ENCODE measurements at regions of chr4 and their contacts with region 1.

Region 1: DNA sequence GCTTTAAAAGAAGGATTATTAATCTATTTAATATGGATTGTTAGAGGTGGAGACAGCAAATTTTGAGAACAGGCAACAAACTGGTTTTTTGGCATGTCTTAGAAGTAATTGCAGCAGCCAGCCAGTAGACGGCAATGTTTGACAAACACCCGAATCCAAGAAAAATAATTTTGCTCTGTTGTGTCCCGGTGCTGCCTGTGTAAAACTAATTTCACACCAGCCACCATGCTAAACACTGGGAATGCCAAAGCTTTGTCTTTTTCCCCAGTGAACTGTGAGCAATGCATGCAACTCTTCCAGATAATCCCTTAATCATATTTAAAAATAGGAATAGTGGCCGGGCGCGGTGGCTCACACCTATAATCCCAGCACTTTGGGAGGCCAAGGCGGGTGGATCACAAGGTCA is 25.9 kb downstream of the SMIM31 start:
- DNase-seq: peak; percentile 13
- ATAC-seq: peak; percentile 57
- H3K4me3 ChIP-seq: no peak overlapping the region
- H3K27ac ChIP-seq: no peak overlapping the region
- H3K4me1 ChIP-seq: no peaks in the 10 kb centered on the region
- H3K27me3 ChIP-seq: no peaks in the 10 kb centered on the region
- CTCF ChIP-seq: peak; percentile 72
- EP300 ChIP-seq: no peak
- POLR2A ChIP-seq: no peak
- RAD21 ChIP-seq: peak; percentile 37; the same call in 1 of the 2 replicates

Region 2: GRCh38 chr4:164734484-164734883 is 45.3 kb before region 1 on chr4:
- CTCF ChIA-PET with region 1: no interaction called
- POLR2A ChIA-PET with region 1: no interaction called
- in situ Hi-C with region 1: no loop called
- intact Hi-C with region 1: no loop called
- DNase-seq: no peak
- ATAC-seq: no peak
- H3K4me3 ChIP-seq: no peak overlapping the region
- H3K27ac ChIP-seq: no peak overlapping the region
- H3K4me1 ChIP-seq: no peaks in the 10 kb centered on the region
- H3K27me3 ChIP-seq: no peaks in the 10 kb centered on the region
- CTCF ChIP-seq: no peak
- EP300 ChIP-seq: no peak
- POLR2A ChIP-seq: no peak
- RAD21 ChIP-seq: no peak

Region 3: DNA sequence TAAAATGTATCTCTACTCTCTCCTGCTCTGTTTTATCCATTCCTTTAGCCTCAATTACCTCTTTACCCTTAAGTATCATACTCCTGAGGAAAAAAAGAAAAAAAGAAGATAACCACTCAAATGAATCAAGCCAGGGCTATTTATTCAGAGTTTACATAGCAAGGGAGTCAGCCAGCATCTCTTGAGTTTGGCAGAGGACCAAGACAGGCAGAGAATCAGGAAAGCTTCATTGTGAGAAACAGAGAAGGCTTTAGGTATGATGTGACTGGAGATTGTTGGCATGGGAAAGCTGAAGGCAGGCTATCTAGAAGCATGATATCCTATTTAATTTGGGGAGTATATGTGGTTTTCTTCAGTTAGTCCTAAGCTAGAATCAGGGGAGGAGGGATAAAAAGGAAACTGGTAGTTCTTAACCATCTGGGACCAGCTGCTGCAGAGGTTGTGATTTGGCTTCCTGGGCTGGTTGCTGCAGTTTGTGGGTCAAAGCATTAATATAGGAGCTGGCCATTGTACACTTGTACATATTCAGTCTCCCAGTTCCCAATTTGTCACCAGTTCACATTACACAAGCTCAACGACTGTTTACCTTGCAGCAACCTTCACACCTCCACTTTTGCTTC is 108.4 kb after region 1 on chr4:
- CTCF ChIA-PET with region 1: no interaction called
- POLR2A ChIA-PET with region 1: no interaction called
- in situ Hi-C with region 1: no loop called
- intact Hi-C with region 1: loop called (anchors 1 kb)
- DNase-seq: no peak
- ATAC-seq: no peak
- H3K4me3 ChIP-seq: no peak overlapping the region
- H3K27ac ChIP-seq: no peak overlapping the region
- H3K4me1 ChIP-seq: no peaks in the 10 kb centered on the region
- H3K27me3 ChIP-seq: no peaks in the 10 kb centered on the region
- CTCF ChIP-seq: no peak
- EP300 ChIP-seq: no peak
- POLR2A ChIP-seq: no peak
- RAD21 ChIP-seq: no peak

Region 4: GRCh38 chr4:164937576-164938270 is 157.9 kb after region 1 on chr4:
- CTCF ChIA-PET with region 1: no interaction called
- POLR2A ChIA-PET with region 1: no interaction called
- in situ Hi-C with region 1: no loop called
- intact Hi-C with region 1: loop called (anchors 1 kb)
- DNase-seq: peak; percentile 12
- ATAC-seq: peak; percentile 78
- H3K4me3 ChIP-seq: no peak overlapping the region
- H3K27ac ChIP-seq: no peak overlapping the region
- H3K4me1 ChIP-seq: no peaks in the 10 kb centered on the region
- H3K27me3 ChIP-seq: no peaks in the 10 kb centered on the region; a peak in 1 of 5 replicates
- CTCF ChIP-seq: peak; percentile 27; the same call in 1 of the 2 replicates
- EP300 ChIP-seq: no peak
- POLR2A ChIP-seq: no peak
- RAD21 ChIP-seq: no peak

Region 5: GRCh38 chr4:164956766-164957643 is 177.2 kb after region 1 on chr4:
- CTCF ChIA-PET with region 1: no interaction called
- POLR2A ChIA-PET with region 1: no interaction called
- in situ Hi-C with region 1: no loop called
- intact Hi-C with region 1: no loop called
- DNase-seq: no peak
- ATAC-seq: no peak
- H3K4me3 ChIP-seq: no peak overlapping the region
- H3K27ac ChIP-seq: no peak overlapping the region
- H3K4me1 ChIP-seq: peaks cover 11% of the 10 kb centered on the region
- H3K27me3 ChIP-seq: no peaks in the 10 kb centered on the region
- CTCF ChIP-seq: no peak
- EP300 ChIP-seq: no peak
- POLR2A ChIP-seq: no peak
- RAD21 ChIP-seq: no peak

Region 6: DNA sequence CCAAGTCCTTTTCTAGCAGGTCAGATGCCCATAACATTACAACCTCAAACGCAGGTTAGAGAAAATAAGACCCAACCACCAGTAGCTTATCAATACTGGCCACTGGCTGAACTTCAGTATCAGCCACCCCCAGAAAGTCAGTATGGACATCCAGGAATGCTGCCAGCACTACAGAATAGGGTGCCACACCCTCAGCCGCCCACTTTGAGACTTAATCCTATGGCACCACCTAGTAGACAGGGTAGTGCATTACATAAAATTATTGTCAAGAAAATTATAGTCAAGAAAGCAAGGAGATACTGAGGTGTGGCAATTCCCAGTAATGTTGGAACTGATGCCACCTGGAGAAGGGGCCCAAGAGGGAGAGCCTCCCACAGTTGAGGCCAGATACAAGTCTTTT is 217.5 kb after region 1 on chr4:
- CTCF ChIA-PET with region 1: no interaction called
- POLR2A ChIA-PET with region 1: no interaction called
- in situ Hi-C with region 1: no loop called
- intact Hi-C with region 1: loop called (anchors 1 kb)
- DNase-seq: peak; percentile 16
- ATAC-seq: no peak
- H3K4me3 ChIP-seq: no peak overlapping the region
- H3K27ac ChIP-seq: no peak overlapping the region
- H3K4me1 ChIP-seq: no peaks in the 10 kb centered on the region
- H3K27me3 ChIP-seq: peaks cover 1 to 4% of the 10 kb centered on the region in 2 experiments; a peak in 3 of 5 replicates
- CTCF ChIP-seq: peak; percentile 43; the same call in 1 of the 2 replicates
- EP300 ChIP-seq: no peak
- POLR2A ChIP-seq: no peak
- RAD21 ChIP-seq: no peak

Region 7: GRCh38 chr4:165096776-165097175 is 317.0 kb after region 1 on chr4:
- CTCF ChIA-PET with region 1: interaction called, 6 read pairs
- POLR2A ChIA-PET with region 1: no interaction called
- in situ Hi-C with region 1: no loop called
- intact Hi-C with region 1: loop called (anchors 1 kb)
- DNase-seq: peak; percentile 8
- ATAC-seq: peak; percentile 52; the same call in 2 of the 3 replicates
- H3K4me3 ChIP-seq: no peak overlapping the region
- H3K27ac ChIP-seq: no peak overlapping the region
- H3K4me1 ChIP-seq: no peaks in the 10 kb centered on the region
- H3K27me3 ChIP-seq: no peaks in the 10 kb centered on the region
- CTCF ChIP-seq: peak; percentile 48
- EP300 ChIP-seq: no peak
- POLR2A ChIP-seq: no peak
- RAD21 ChIP-seq: no peak